ENCODE measurements at regions of chr14 and their contacts with region 1.

Region 1: GRCh38 chr14:55731881-55732498 is 152.0 kb downstream of the KTN1 start:
- H3K4me3 ChIP-seq: no peak overlapping the region
- H3K27ac ChIP-seq: no peak overlapping the region
- H3K4me1 ChIP-seq: no peaks in the 10 kb centered on the region
- CTCF ChIP-seq: no peak

Region 2: DNA sequence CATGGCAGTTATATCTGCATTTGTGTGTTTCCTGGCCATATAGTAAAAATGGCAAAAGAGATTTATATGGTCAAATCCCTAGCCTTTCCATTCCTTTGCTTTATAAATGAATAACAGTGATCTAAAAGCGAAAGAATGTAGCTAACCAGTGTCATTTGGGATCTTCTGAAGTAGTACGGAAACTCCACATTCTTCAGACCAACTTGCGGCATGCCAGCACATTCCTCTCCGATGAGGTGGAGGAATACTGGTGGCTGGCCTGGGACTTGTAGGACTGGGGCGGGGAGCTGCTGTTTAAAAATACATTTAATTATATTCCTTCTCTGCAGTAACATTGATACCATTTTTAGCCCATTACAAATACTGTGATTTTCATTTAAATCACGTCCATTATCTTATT is 1079.8 kb before region 1 on chr14:
- CTCF ChIA-PET with region 1: no interaction called
- POLR2A ChIA-PET with region 1: no interaction called
- H3K4me3 ChIP-seq: no peak overlapping the region; the same call in 1 of the 2 replicates
- H3K27ac ChIP-seq: no peak overlapping the region
- H3K4me1 ChIP-seq: peaks cover 20% of the 10 kb centered on the region
- CTCF ChIP-seq: no peak

Region 3: DNA sequence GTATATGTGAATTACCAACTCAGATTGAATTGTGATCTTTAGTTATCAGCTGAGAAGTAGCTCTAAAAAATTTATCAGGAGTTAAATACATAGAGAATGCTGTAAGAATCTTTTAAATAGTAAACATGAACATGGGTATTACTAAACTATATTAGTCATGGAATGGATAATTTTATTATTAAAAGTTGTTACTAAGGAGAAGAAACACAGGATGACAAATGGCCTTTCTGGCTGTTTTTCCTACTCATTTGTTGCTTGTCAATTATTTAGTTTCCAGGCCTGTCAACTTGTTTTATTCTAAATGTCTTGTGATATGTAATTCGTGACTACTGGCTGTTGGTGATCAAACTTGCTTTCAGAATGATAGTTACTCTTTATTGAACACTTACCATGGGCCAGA is 93.3 kb before region 1 on chr14:
- CTCF ChIA-PET with region 1: no interaction called
- POLR2A ChIA-PET with region 1: no interaction called
- H3K4me3 ChIP-seq: no peak overlapping the region
- H3K27ac ChIP-seq: no peak overlapping the region
- H3K4me1 ChIP-seq: no peaks in the 10 kb centered on the region
- CTCF ChIP-seq: no peak

Region 4: GRCh38 chr14:55721353-55721752 is 10.6 kb before region 1 on chr14:
- CTCF ChIA-PET with region 1: interaction called, 26 read pairs
- POLR2A ChIA-PET with region 1: no interaction called
- H3K4me3 ChIP-seq: no peak overlapping the region
- H3K27ac ChIP-seq: no peak overlapping the region
- H3K4me1 ChIP-seq: no peaks in the 10 kb centered on the region; the same call in 1 of the 2 replicates
- CTCF ChIP-seq: no peak

Region 5: GRCh38 chr14:56339855-56340701 is 608.1 kb after region 1 on chr14:
- CTCF ChIA-PET with region 1: interaction called, 16 read pairs
- POLR2A ChIA-PET with region 1: no interaction called
- H3K4me3 ChIP-seq: no peak overlapping the region
- H3K27ac ChIP-seq: no peak overlapping the region
- H3K4me1 ChIP-seq: no peaks in the 10 kb centered on the region
- CTCF ChIP-seq: peak; percentile 54; the same call in 1 of the 2 replicates

Measured in HEK293 (cell line).